Body of pancreas (tissue), 4 donors: ENCODE measurements at regions of chr14 and their contacts with region 1.

Region 1: GRCh38 chr14:24058260-24058950 is 6.6 kb downstream of the CARMIL3 start:
- DNase-seq: peak; percentile 86 to 94 (median 88)
- ATAC-seq: peak; percentile 92
- H3K4me3 ChIP-seq: no peak overlapping the region
- H3K27ac ChIP-seq: no peak overlapping the region
- H3K4me1 ChIP-seq: peaks cover 32% of the 10 kb centered on the region
- H3K27me3 ChIP-seq: no peaks in the 10 kb centered on the region
- CTCF ChIP-seq: peak; percentile 78 to 97 (median 91)
- POLR2A ChIP-seq: no peak

Region 2: GRCh38 chr14:23881282-23881681 is 177.1 kb before region 1 on chr14:
- intact Hi-C with region 1: no loop called
- DNase-seq: no peak
- ATAC-seq: no peak
- H3K4me3 ChIP-seq: no peak overlapping the region
- H3K27ac ChIP-seq: no peak overlapping the region
- H3K4me1 ChIP-seq: peaks cover 20% of the 10 kb centered on the region
- H3K27me3 ChIP-seq: no peaks in the 10 kb centered on the region
- CTCF ChIP-seq: no peak
- POLR2A ChIP-seq: no peak

Region 3: GRCh38 chr14:24013654-24014514 is 44.5 kb before region 1 on chr14:
- intact Hi-C with region 1: no loop called
- DNase-seq: peak; percentile 54 to 79 (median 66)
- ATAC-seq: peak; percentile 92
- H3K4me3 ChIP-seq: no peak overlapping the region
- H3K27ac ChIP-seq: no peak overlapping the region
- H3K4me1 ChIP-seq: peaks cover 11% of the 10 kb centered on the region
- H3K27me3 ChIP-seq: no peaks in the 10 kb centered on the region
- CTCF ChIP-seq: peak; percentile 84 to 98 (median 96)
- POLR2A ChIP-seq: no peak

Region 4: GRCh38 chr14:24108336-24108874 is 50.0 kb after region 1 on chr14:
- intact Hi-C with region 1: loop called (anchors 5 kb)
- DNase-seq: no peak
- ATAC-seq: no peak
- H3K4me3 ChIP-seq: no peak overlapping the region
- H3K27ac ChIP-seq: peak overlapping the region; percentile 20 to 69 (median 62)
- H3K4me1 ChIP-seq: peaks cover 30% of the 10 kb centered on the region
- H3K27me3 ChIP-seq: no peaks in the 10 kb centered on the region
- CTCF ChIP-seq: no peak
- POLR2A ChIP-seq: peak in 1 of 3 donors; percentile 21

Region 5: DNA sequence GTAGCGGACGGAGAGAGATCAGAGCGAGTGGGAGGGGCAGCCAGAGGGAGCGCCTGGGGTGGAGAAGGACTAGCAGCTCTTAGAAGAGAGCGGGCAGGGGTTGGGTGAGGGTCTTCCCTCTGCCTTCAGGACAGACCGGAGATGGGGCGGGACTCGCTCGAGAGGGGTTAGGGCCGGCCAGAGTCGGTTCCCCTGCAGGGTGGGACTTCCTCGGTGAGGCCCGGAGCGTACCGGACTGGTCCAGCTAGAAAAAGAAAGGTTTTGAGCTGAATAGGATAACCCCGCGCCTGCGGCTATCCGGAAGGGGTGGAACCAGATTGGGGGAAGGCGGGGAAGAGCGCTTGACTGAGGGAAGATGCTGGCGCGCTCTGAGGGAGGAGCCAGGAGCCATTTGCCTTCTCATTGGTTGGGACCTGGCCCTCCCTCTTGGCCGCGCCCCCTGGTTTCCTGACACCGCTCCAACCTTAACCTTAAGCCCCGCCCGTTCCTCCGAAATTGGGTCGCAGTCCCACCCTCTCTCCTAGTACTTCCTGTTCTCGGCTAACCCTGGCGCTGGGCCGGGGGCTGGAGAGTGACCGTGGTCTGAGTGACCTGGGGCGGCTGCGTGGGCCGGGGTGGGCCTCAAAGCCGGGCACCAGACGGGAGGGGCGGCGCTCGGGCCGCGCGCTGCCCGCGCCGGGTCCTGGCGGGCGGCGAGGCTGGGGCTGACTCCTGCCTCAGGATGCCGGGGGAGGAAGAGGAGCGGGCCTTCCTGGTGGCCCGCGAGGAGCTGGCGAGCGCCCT is 88.8 kb after region 1 on chr14 and contains the start of gene RNF31:
- intact Hi-C with region 1: no loop called
- DNase-seq: peak; percentile 98 to 99 (median 98)
- ATAC-seq: peak; percentile 93
- H3K4me3 ChIP-seq: peak within 1 kb of the TSS; percentile 87 to 96
- H3K27ac ChIP-seq: peak within 1 kb of the TSS; percentile 78 to 93 (median 84)
- H3K4me1 ChIP-seq: peaks cover 41% of the 10 kb centered on the region
- H3K27me3 ChIP-seq: no peaks in the 10 kb centered on the region
- CTCF ChIP-seq: peak in 1 of 7 experiments; percentile 3
- POLR2A ChIP-seq: peak in 2 of 3 donors; percentile 67 to 76
- total RNA-seq, gene RNF31: 38.1 to 83.1 TPM

Region 6: GRCh38 chr14:24160850-24161804 is 102.7 kb after region 1 on chr14 and contains the start of gene IRF9:
- intact Hi-C with region 1: loop called (anchors 10 kb)
- DNase-seq: peak; percentile 97 to 98 (median 98)
- ATAC-seq: peak; percentile 95
- H3K4me3 ChIP-seq: peak within 1 kb of the TSS; percentile 39 to 48
- H3K27ac ChIP-seq: peak within 1 kb of the TSS; percentile 79 to 89 (median 84)
- H3K4me1 ChIP-seq: peaks cover 35% of the 10 kb centered on the region
- H3K27me3 ChIP-seq: no peaks in the 10 kb centered on the region
- CTCF ChIP-seq: peak; percentile 91 to 99 (median 98)
- POLR2A ChIP-seq: peak; percentile 10 to 81 (median 79)
- total RNA-seq, gene IRF9: 12.5 to 21.5 TPM